BJ (cell line): ENCODE measurements at regions of chr6 and their contacts with region 1.

Region 1: GRCh38 chr6:144008120-144008811 is at the start of gene PLAGL1:
- DNase-seq: no peak
- H3K4me3 ChIP-seq: peak within 1 kb of the TSS; percentile 57
- H3K27me3 ChIP-seq: no peaks in the 10 kb centered on the region
- CTCF ChIP-seq: no peak
- polyA plus RNA-seq, gene PLAGL1: 32.7 and 68.0 TPM in 2 replicates

Region 2: GRCh38 chr6:142653710-142654420 is 1354.4 kb before region 1 on chr6:
- CTCF ChIA-PET with region 1: no interaction called
- POLR2A ChIA-PET with region 1: no interaction called
- DNase-seq: no peak
- H3K4me3 ChIP-seq: no peak overlapping the region
- H3K27me3 ChIP-seq: peaks cover 2% of the 10 kb centered on the region; the same call in 1 of the 2 replicates
- CTCF ChIP-seq: no peak

Region 3: GRCh38 chr6:143759666-143760065 is 248.6 kb before region 1 on chr6:
- CTCF ChIA-PET with region 1: no interaction called
- POLR2A ChIA-PET with region 1: interaction called, 14 read pairs
- DNase-seq: no peak
- H3K4me3 ChIP-seq: no peak overlapping the region
- H3K27me3 ChIP-seq: no peaks in the 10 kb centered on the region
- CTCF ChIP-seq: no peak